Heart left ventricle (tissue), 16 donors: ENCODE measurements at regions of chr12 and their contacts with region 1.

Region 1: DNA sequence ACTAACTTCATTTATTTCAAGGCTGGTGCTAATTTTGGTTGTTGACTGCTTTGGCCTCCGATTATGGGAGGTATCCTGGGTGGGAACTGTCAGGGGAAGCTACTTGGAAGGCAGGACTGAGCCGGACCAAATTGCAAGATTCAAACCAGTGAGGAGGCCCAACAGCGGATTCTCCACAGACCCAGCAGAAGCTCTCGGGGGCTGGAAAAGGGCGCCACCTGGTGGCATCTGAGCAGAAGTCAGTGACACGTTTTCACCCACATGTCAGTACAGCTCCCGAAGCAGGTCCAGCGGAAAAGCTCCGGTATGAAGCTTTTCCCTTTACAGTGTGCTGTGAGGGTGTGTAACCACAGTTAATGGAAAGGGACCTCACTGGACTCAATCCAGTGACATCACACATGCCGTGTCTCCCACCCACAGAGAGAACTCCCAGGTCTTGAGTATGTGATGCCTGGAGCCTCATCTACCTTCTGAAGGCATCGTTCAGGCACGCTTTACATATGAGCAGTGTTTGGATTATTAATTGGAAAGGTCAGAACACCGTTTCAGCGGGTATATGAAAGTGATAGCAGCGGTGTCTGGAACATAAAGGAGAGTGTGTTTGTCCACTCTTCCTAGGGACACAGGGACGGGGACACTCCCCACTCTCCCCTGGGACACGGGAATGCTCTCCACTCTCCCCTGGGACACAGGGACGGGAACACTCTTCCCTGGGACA is 3.6 kb upstream of the P2RX2 start:
- DNase-seq: peak; percentile 79 to 91 (median 85)
- ATAC-seq: peak; percentile 86 to 94 (median 91)
- H3K4me3 ChIP-seq: no peak overlapping the region
- H3K27ac ChIP-seq: no peak overlapping the region
- H3K4me1 ChIP-seq: peaks cover 0 to 17% (median 2%) of the 10 kb centered on the region in 12 donors
- H3K27me3 ChIP-seq: peaks cover 36 to 61% (median 53%) of the 10 kb centered on the region in 9 donors
- CTCF ChIP-seq: peak; percentile 82 to 93 (median 88)
- POLR2A ChIP-seq: no peak

Region 2: DNA sequence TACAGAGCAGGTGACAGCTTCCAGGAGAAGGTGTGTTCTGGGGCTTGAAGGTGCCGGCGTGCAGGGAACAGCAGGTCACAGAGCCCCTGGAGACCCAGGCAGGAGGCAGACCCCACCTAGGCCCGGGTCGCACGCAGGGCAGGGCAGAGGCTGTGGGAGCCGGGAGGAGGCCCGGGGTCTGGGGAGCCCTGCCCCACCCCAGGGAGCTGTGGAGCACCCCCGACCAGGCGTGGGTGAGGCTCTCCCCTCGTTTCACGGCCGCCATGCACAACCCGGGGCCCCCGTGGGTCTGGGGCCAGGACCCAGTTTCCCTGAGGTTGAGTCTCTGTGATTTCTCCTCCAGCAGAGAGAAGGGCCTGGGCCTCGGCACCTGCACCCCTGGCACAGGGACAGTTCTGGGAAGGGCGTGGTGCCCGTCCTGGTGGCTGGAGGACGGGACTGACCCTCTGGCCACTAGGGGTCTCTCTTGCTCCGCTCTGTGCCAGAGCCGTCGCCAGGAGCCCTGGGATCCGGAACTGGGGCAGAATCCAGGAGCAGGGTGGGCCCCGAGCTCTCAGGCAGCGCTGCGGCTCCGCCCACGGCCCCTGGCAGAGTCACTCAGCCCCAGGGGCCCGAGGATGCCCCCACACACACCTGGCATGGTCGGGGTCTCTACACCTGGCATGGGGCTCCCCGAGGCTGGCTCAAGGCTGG is 200.2 kb before region 1 on chr12:
- intact Hi-C with region 1: loop called (anchors 1 to 2 kb)
- DNase-seq: peak; percentile 79 to 88 (median 83)
- ATAC-seq: peak; percentile 90 to 97 (median 94)
- H3K4me3 ChIP-seq: no peak overlapping the region
- H3K27ac ChIP-seq: no peak overlapping the region
- H3K4me1 ChIP-seq: peaks cover 0 to 9% (median 6%) of the 10 kb centered on the region in 12 donors
- H3K27me3 ChIP-seq: peaks cover 5 to 63% (median 31%) of the 10 kb centered on the region in 9 donors
- CTCF ChIP-seq: peak; percentile 89 to 97 (median 94)
- POLR2A ChIP-seq: no peak

Region 3: DNA sequence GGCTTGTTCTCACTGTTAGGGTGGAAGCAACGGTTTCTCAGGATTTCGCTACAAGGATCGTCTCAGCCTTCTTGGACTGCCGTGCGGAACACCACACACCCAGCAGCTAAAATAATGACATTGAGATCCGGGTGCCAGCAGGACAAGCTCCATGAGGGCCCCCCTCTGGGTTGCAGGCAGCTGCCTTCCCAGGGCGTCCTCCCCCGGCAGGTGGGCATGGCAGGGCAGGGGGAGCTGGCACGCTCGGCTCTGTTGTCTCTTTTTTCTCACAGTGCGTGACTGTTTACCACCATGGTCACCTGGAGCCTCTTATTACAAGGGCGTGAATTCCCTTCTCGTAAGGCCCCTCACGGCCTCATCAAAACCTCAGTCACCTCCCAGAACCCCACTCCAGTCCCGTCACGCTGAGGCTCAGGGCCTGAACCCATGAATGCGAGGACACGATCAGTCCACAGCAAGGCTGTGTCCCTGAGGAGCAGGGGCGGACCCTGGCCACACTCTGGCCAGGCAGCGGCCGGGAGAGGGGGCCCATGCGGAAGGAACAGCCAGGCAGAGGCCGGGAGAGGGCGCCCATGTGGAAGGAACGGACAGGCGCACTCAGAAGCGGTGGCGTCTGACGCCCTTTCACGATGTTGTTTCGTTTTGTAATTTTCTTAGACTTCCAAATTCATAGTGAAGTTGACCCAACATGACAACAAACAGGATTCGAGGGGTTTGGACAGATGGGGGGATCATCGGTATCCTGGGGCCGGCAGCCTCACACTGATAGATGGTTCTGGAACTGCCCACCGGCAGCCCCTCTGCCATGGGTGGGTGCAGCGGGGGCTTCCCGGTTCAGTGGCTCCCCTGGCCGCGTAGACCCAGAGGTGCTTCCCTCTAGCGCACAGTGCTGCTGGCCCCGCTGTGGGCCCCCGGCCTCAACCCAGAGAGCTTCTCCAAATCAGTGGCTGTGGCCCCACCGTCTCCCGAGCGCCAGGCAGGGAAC is 14.7 kb before region 1 on chr12:
- intact Hi-C with region 1: loop called in 3 of 10 experiments (anchors 2 kb)
- DNase-seq: peak; percentile 62 to 82 (median 70)
- ATAC-seq: peak; percentile 56 to 80 (median 71)
- H3K4me3 ChIP-seq: peak overlapping the region in 11 of 12 donors; percentile 15 to 59 (median 43)
- H3K27ac ChIP-seq: peak overlapping the region in 5 of 12 donors; percentile 6 to 44 (median 21)
- H3K4me1 ChIP-seq: peaks cover 0 to 45% (median 15%) of the 10 kb centered on the region in 12 donors
- H3K27me3 ChIP-seq: peaks cover 0 to 66% (median 20%) of the 10 kb centered on the region in 9 donors
- CTCF ChIP-seq: peak; percentile 40 to 78 (median 66)
- POLR2A ChIP-seq: no peak